Tibial artery (tissue), 4 donors: ENCODE measurements at regions of chr18 and their contacts with region 1.

Region 1: GRCh38 chr18:46721331-46721730 is 35.5 kb downstream of the ST8SIA5 start:
- DNase-seq: no peak
- H3K4me3 ChIP-seq: no peak overlapping the region
- H3K27ac ChIP-seq: no peak overlapping the region
- H3K4me1 ChIP-seq: peaks cover 0 to 8% (median 4%) of the 10 kb centered on the region in 4 donors
- H3K27me3 ChIP-seq: no peaks in the 10 kb centered on the region
- CTCF ChIP-seq: no peak

Region 2: GRCh38 chr18:46772357-46772756 is 51.0 kb after region 1 on chr18:
- intact Hi-C with region 1: loop called (anchors 2 kb)
- DNase-seq: no peak
- H3K4me3 ChIP-seq: no peak overlapping the region
- H3K27ac ChIP-seq: no peak overlapping the region
- H3K4me1 ChIP-seq: no peaks in the 10 kb centered on the region
- H3K27me3 ChIP-seq: no peaks in the 10 kb centered on the region
- CTCF ChIP-seq: no peak